AG04449 (cell line): ENCODE measurements at regions of chr16 and their contacts with region 1.

Region 1: GRCh38 chr16:87571136-87571867 is 31.0 kb upstream of the JPH3 start:
- DNase-seq: no peak
- H3K4me3 ChIP-seq: no peak overlapping the region
- CTCF ChIP-seq: peak; percentile 49

Region 2: DNA sequence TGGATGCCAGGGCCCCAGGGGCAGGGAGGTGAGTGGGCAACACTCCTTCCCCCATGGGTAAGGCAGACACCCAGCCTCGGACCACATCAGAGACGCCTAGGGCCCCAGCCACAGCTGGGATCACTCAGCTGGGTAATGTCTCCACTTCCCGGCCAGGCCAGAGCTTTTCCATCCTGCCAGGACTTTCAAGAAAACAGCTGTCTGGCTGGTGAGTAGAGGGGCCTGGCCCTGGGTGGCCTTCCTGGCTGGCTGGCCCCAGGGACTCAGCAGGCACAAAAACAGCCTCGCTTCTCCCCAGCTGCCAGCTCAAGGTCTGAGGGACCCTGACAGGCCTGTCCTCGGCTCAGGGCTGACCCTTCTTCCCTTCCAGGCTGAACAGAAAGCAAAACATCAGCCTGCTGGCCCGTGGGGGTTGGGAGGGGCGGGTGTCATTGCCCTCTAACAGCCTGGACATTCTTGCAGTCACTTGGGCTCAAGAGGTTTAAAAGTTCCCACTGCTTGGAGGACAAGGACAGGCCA is 14.3 kb before region 1 on chr16:
- CTCF ChIA-PET with region 1: interaction called, 10 read pairs
- POLR2A ChIA-PET with region 1: no interaction called
- DNase-seq: no peak
- H3K4me3 ChIP-seq: no peak overlapping the region
- CTCF ChIP-seq: no peak

Region 3: DNA sequence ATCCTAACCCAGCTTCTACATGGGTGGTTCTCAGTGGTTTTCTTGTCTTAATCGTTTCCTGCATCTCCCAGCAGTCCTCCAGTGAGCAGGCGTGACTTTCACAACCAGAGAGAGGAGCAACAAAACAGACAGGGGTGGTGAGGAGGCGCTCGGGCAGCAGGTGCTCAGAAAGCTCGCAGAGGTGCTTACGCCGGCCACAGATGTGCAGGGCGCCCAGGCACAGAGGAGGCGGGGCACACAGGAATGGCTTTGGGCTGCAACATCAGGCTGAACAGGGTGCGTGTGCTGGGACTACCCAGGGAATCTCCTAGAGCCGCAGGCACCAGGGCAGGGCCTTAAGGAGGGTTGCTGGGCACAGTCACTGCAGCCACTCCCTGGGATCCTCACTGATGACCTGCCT is 161.9 kb after region 1 on chr16:
- CTCF ChIA-PET with region 1: no interaction called
- POLR2A ChIA-PET with region 1: no interaction called
- DNase-seq: no peak
- H3K4me3 ChIP-seq: no peak overlapping the region
- CTCF ChIP-seq: no peak